ENCODE measurements at regions of chr12 and their contacts with region 1.

Region 1: GRCh38 chr12:121894633-121895032 is 6.0 kb downstream of the PSMD9 start:
- DNase-seq: no peak
- H3K4me3 Mint-ChIP-seq: no peak overlapping the region
- H3K27ac Mint-ChIP-seq: peak overlapping the region; percentile 71
- H3K4me1 Mint-ChIP-seq: peaks cover 39% of the 10 kb centered on the region
- H3K27me3 Mint-ChIP-seq: no peaks in the 10 kb centered on the region

Region 2: GRCh38 chr12:121911824-121912585 is 17.4 kb after region 1 on chr12:
- CTCF ChIA-PET with region 1: no interaction called
- POLR2A ChIA-PET with region 1: no interaction called
- intact Hi-C with region 1: loop called (anchors 1 kb)
- DNase-seq: peak; percentile 69
- H3K4me3 Mint-ChIP-seq: peak overlapping the region; percentile 31
- H3K27ac Mint-ChIP-seq: peak overlapping the region; percentile 66
- H3K4me1 Mint-ChIP-seq: peaks cover 12% of the 10 kb centered on the region
- H3K27me3 Mint-ChIP-seq: no peaks in the 10 kb centered on the region

Measured in activated CD4-positive, alpha-beta memory T cell treated with anti-CD3 and anti-CD28 coated beads for 36 hours (primary cell).